Heart left ventricle (tissue), 16 donors: ENCODE measurements at regions of chr10 and their contacts with region 1.

Region 1: GRCh38 chr10:106682175-106682574 is 482.3 kb downstream of the SORCS1 start:
- DNase-seq: no peak
- ATAC-seq: no peak
- H3K4me3 ChIP-seq: no peak overlapping the region
- H3K27ac ChIP-seq: no peak overlapping the region
- H3K4me1 ChIP-seq: peaks cover 0 to 7% (median 0%) of the 10 kb centered on the region in 12 donors
- H3K27me3 ChIP-seq: no peaks in the 10 kb centered on the region
- CTCF ChIP-seq: peak in 7 of 12 donors; percentile 17 to 41 (median 31)
- POLR2A ChIP-seq: no peak

Region 2: DNA sequence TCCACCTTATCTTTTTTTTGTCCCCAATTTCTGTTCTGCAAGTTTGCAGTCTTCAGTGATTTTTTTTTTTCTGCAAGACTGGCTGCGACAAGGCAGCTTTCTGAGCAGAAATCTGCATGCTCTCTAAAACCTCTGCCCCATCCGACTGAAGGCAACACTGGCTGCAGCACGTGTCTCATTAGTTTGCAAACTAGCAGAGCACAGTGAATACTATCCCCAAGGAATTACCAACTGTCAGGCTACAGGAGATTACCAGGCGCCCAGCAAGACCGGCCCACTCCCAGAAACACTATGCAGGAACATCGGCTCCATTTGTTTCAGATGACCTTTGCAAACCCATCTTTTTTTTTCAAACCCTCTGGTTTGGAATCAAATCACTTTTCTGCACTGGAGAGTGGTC is 56.4 kb before region 1 on chr10:
- intact Hi-C with region 1: loop called in 6 of 10 experiments (anchors 1 to 5 kb)
- DNase-seq: no peak
- ATAC-seq: no peak
- H3K4me3 ChIP-seq: no peak overlapping the region
- H3K27ac ChIP-seq: no peak overlapping the region
- H3K4me1 ChIP-seq: no peaks in the 10 kb centered on the region
- H3K27me3 ChIP-seq: peaks cover 0 to 11% (median 0%) of the 10 kb centered on the region in 9 donors
- CTCF ChIP-seq: no peak
- POLR2A ChIP-seq: no peak